ENCODE measurements at regions of chrX and their contacts with region 1.

Region 1: GRCh38 chrX:83630662-83631061 is 122.6 kb downstream of the POU3F4 start:
- DNase-seq: no peak
- H3K4me3 ChIP-seq: no peak overlapping the region
- H3K27ac ChIP-seq: no peak overlapping the region
- H3K4me1 ChIP-seq: no peaks in the 10 kb centered on the region
- H3K27me3 ChIP-seq: no peaks in the 10 kb centered on the region
- CTCF ChIP-seq: no peak

Region 2: DNA sequence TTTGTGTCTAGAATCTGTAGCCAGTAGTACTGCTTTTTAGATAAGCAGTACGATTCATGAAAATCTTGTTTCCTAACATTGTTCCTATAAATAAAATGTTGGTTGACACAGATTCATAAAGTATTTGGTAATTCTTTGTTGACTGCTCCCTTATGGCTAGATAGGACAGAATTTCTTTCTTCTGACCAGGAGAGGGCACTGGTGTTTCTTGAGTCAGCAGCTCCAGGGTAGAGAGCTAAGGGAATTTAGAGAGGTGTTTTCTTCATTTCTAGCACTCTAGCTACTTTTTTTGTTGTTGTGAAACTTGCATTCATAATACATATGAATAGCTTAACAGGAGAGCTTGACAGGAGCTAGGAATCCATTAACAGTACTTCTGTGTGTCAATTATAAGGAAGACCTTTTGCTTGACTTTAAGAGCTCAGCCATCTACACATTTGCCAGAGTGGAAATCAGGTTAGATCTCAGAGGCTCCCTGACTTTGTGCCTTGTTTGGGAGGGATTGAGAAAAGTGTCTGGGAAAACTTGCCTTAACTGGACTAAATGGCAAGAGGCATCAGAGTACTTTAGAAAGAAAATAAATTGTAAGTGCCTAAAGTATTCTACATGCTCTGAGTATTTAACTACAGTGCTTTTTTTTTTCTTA is 1672.6 kb before region 1 on chrX:
- CTCF ChIA-PET with region 1: no interaction called
- POLR2A ChIA-PET with region 1: no interaction called
- intact Hi-C with region 1: loop called (anchors 5 kb)
- DNase-seq: no peak
- H3K4me3 ChIP-seq: no peak overlapping the region
- H3K27ac ChIP-seq: no peak overlapping the region
- H3K4me1 ChIP-seq: no peaks in the 10 kb centered on the region
- H3K27me3 ChIP-seq: no peaks in the 10 kb centered on the region
- CTCF ChIP-seq: peak; percentile 47; the same call in 1 of the 2 replicates